Caco-2 (cell line): ENCODE measurements at regions of chr13 and their contacts with region 1.

Region 1: DNA sequence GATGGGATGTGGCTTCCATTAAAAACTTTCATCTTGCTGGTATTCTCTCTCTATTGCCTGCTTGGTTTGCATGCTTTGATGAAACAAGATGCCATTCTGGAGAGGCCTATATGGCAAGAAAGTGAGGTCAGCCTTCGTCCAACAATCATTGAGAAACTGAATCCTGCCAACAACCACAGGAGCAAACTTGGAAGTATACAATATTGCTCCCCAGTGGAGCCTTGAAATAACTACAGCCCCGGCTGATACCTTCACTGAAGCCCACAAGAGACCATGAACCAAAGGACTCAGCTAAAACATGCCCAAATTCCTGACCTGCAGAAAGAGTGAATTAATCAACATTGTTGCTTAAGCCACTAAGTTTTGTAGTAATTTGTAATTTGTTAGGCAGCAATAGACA is 82.5 kb upstream of the FGF14 start:
- DNase-seq: peak in 1 of 2 experiments; percentile 8
- H3K4me3 ChIP-seq: no peak overlapping the region
- H3K4me3 Mint-ChIP-seq: no peak overlapping the region
- H3K27ac Mint-ChIP-seq: no peak overlapping the region
- H3K4me1 ChIP-seq: no peaks in the 10 kb centered on the region
- H3K4me1 Mint-ChIP-seq: no peaks in the 10 kb centered on the region
- H3K27me3 ChIP-seq: no peaks in the 10 kb centered on the region
- H3K27me3 Mint-ChIP-seq: peaks cover 3% of the 10 kb centered on the region
- CTCF ChIP-seq: peak; percentile 19 to 26

Region 2: DNA sequence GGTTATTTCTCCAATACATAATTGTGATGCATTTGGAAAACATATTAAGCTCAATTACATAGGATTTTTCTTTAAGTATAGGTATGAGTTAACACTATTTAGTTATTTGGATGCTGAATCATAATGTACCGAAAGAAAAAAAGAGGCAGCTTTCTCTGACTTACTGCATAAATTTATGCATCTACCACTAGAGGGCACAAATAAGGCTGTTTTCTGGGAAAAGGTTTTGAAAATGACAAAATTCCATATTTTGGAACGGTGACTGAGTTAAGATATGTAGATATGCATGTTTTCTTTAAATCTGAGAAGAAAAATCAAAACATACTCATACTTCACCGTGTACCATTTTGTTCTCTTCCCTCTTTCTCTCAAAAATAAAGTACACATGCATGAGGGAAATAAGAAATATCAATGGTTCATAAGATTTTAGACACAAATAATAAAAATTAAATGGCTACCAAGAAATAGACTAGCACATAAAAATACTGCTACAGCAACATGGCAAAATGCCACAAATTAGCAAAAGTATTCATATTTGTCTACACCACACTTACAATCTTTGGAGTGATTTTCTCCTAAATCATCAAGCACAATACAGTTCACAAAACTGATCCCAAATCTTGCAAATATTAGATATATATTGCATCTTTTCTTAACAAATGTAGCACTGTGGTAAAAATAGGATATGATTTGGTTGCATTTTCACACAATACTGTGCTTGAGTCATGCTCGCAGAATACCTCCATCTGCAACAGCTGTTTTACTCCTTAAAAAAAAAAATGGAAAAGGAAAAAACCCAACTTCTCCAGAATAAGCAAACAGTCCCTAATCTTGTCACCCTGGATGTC is 342.5 kb before region 1 on chr13:
- CTCF ChIA-PET with region 1: no interaction called
- POLR2A ChIA-PET with region 1: no interaction called
- intact Hi-C with region 1: loop called (anchors 10 kb)
- DNase-seq: peak in 1 of 2 experiments; percentile 5
- H3K4me3 ChIP-seq: no peak overlapping the region
- H3K4me3 Mint-ChIP-seq: no peak overlapping the region
- H3K27ac Mint-ChIP-seq: no peak overlapping the region
- H3K4me1 ChIP-seq: no peaks in the 10 kb centered on the region
- H3K4me1 Mint-ChIP-seq: no peaks in the 10 kb centered on the region
- H3K27me3 ChIP-seq: no peaks in the 10 kb centered on the region
- H3K27me3 Mint-ChIP-seq: peaks cover 2% of the 10 kb centered on the region
- CTCF ChIP-seq: peak; percentile 69 to 80

Region 3: DNA sequence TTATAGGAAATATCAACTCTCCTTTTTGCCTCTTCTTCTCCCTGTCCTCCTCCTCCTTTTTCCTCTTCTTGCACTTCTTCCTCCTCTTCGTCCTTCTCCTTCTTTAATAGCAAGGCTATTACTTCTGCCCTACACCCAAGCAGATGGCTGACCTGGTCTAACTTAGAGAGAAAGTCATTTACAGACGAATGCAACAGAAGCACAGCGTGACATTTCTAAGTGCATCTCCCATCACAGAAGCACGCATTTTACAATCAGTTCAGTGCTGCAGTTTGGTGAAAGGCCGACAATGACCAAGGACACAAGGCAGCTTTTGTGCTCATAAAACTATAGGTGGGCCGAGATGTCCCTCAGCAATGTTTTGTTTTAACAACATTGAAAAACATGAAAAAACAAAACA is 314.0 kb before region 1 on chr13:
- CTCF ChIA-PET with region 1: no interaction called
- POLR2A ChIA-PET with region 1: no interaction called
- intact Hi-C with region 1: no loop called
- DNase-seq: no peak
- H3K4me3 ChIP-seq: no peak overlapping the region
- H3K4me3 Mint-ChIP-seq: no peak overlapping the region
- H3K27ac Mint-ChIP-seq: no peak overlapping the region
- H3K4me1 ChIP-seq: no peaks in the 10 kb centered on the region
- H3K4me1 Mint-ChIP-seq: no peaks in the 10 kb centered on the region
- H3K27me3 ChIP-seq: no peaks in the 10 kb centered on the region
- H3K27me3 Mint-ChIP-seq: peaks cover 2% of the 10 kb centered on the region
- CTCF ChIP-seq: no peak

Region 4: DNA sequence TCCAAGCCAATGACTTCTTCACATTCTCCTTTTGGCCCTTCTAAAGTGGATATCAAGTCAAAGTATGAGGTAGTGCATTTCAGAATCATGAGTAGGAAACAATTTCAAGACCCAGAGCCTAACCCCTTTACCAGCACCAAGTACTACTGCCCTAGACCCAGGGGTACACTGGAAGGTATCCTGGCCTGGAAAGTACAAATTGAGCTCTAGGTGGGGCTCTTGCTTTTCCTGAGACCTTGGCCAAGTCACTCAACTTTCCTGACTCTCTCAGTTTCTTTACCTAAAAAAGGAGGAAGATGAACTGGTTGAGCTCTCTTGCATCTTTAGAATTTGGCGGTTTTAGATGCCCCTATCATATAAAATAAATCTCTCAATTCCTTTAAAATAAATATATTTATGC is 287.1 kb before region 1 on chr13:
- CTCF ChIA-PET with region 1: no interaction called
- POLR2A ChIA-PET with region 1: no interaction called
- intact Hi-C with region 1: loop called (anchors 1 kb)
- DNase-seq: peak in 1 of 2 experiments; percentile 34
- H3K4me3 ChIP-seq: no peak overlapping the region
- H3K4me3 Mint-ChIP-seq: no peak overlapping the region
- H3K27ac Mint-ChIP-seq: no peak overlapping the region
- H3K4me1 ChIP-seq: no peaks in the 10 kb centered on the region
- H3K4me1 Mint-ChIP-seq: no peaks in the 10 kb centered on the region
- H3K27me3 ChIP-seq: no peaks in the 10 kb centered on the region
- H3K27me3 Mint-ChIP-seq: peaks cover 5% of the 10 kb centered on the region
- CTCF ChIP-seq: peak in 1 of 2 experiments; percentile 27

Region 5: DNA sequence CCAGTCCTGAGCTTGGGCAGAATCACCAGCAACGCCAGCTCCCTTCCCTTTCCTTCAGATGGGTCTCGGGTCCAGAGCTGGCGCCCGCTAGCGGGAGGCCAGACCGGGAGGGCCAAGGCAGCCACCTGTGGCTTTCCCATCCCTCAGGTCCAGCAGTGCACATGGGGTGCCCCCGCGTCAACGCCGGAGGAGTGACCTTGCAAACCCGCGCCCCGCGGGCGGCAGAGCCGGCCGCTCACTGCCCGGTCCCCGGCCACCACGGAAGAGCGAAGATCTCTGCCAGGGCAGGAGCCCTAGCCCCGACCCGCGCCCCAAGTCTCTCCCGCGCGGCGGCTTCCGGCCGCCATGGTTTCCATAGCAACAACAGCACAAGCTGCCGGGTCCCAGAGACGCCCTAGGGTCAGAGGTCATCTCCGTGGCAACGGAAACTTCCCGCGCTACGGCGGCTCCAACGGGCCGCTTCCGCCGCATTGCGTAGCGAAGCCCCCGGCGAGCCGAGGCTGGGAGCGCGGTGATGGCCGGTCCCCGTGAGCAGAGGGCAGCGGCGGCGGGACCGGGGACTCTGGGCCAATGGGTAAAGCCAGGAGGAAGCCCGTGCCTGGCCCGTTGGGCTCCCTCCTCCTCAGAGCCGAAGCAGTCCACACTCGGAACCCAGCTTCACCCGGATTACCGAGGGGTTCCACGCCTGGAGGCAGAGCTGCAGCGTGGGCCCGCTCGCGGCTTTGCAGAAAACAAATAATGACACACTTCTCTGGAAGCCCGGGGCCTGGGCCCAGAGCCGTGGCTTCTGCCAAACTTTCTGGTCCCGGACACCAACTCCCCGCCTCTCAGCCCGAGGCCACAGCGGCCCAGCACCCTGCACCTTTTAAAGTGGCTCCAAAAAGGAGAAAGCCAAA is 89.9 kb before region 1 on chr13:
- CTCF ChIA-PET with region 1: no interaction called
- POLR2A ChIA-PET with region 1: no interaction called
- intact Hi-C with region 1: no loop called
- DNase-seq: no peak
- H3K4me3 ChIP-seq: no peak overlapping the region
- H3K4me3 Mint-ChIP-seq: no peak overlapping the region
- H3K27ac Mint-ChIP-seq: no peak overlapping the region
- H3K4me1 ChIP-seq: no peaks in the 10 kb centered on the region
- H3K4me1 Mint-ChIP-seq: no peaks in the 10 kb centered on the region
- H3K27me3 ChIP-seq: no peaks in the 10 kb centered on the region
- H3K27me3 Mint-ChIP-seq: peaks cover 19% of the 10 kb centered on the region
- CTCF ChIP-seq: no peak